Transverse colon (tissue), 4 donors: ENCODE measurements at regions of chr1 and their contacts with region 1.

Region 1: DNA sequence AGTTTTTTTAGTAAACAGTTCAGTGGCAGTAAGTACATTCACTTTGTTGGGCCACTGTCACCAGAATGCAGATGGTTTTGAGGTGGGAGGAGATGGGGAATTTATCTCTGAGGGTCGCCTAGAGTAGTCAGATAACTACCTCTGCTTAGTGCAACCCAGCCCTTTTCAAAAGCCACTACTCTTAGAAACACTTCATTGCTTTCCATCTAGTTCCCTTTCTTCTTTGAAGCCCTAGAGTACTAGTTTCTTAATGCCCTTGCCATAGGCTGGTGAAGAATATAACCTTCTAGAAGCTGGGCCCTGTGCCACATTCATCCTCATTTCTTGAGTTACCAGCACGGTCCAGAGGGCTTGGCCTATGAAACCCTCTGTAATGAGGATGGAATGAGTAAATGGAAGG is 28.4 kb upstream of the ST3GAL3 start:
- DNase-seq: no peak
- H3K4me3 ChIP-seq: no peak overlapping the region
- H3K27ac ChIP-seq: no peak overlapping the region
- H3K4me1 ChIP-seq: no peaks in the 10 kb centered on the region
- H3K27me3 ChIP-seq: no peaks in the 10 kb centered on the region
- CTCF ChIP-seq: no peak
- EP300 ChIP-seq: no peak
- POLR2A ChIP-seq: no peak

Region 2: GRCh38 chr1:43660355-43660754 is 18.6 kb before region 1 on chr1:
- in situ Hi-C with region 1: no loop called
- intact Hi-C with region 1: loop called (anchors 2 kb)
- DNase-seq: no peak
- H3K4me3 ChIP-seq: no peak overlapping the region
- H3K27ac ChIP-seq: no peak overlapping the region
- H3K4me1 ChIP-seq: peaks cover 0 to 12% (median 0%) of the 10 kb centered on the region in 4 donors
- H3K27me3 ChIP-seq: no peaks in the 10 kb centered on the region
- CTCF ChIP-seq: no peak
- EP300 ChIP-seq: no peak
- POLR2A ChIP-seq: no peak

Region 3: DNA sequence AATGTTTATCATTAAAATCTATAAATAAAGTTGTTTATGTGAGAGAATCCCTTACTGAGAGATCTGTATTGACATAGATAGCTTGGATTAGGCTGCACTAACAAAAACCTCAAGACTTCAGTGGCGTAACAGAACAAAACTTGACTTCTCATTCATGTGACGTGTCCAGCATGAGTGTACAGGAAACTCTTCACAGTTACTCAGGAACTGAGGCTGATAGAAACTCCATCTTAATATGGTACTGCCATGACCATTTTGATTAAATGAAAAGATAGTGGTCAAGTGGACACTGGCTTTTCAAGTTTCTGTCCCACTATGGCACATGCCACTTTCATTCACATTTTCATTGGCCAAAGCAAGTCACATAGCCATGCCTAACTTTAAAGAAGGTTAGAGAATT is 32.1 kb after region 1 on chr1:
- in situ Hi-C with region 1: no loop called
- intact Hi-C with region 1: no loop called
- DNase-seq: no peak
- H3K4me3 ChIP-seq: no peak overlapping the region
- H3K27ac ChIP-seq: no peak overlapping the region
- H3K4me1 ChIP-seq: peaks cover 6 to 24% (median 16%) of the 10 kb centered on the region in 4 donors
- H3K27me3 ChIP-seq: no peaks in the 10 kb centered on the region
- CTCF ChIP-seq: no peak
- EP300 ChIP-seq: no peak
- POLR2A ChIP-seq: no peak

Region 4: DNA sequence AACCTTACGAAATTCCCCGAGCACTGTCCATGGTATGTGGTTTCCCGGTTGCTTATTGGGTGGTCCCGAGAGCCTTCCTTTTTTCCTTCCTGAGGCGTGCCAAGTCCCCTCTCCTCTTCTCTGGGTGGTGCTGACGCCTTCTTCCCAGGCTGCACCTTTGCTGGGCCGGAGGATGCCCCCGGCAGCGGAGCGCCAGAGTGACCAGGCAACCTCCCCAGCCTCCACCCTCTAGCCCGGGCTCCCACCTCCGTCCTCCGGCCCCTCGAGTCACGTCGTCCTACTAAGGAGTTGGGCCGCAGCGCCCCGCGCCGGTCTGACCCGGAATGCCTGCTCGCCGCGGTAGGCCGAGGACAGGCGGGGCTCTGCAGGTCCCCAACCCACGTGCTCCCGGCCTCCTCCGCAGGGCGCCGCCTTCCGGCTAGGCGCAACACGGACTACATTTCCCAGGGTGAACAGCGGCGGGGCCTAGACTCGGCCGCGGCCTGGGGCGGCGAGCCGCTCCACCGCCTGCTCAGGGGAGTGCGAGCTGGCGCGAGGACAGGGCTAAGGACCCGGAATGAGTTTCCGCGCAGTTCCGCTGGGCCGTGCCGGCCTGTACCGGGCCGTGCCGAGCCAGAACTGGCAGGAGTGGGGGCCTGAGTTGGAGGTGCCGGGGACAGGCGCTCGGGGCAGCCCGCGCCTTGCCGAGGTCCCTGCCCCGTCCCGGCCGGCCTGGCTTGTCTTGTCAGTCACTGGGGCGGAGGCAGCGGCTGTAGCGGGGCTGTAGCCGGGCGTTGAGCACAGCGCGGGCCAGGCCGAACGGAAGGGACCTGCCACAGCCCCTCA is 267.5 kb after region 1 on chr1 and contains the start of gene IPO13:
- in situ Hi-C with region 1: no loop called
- intact Hi-C with region 1: no loop called
- DNase-seq: peak; percentile 97
- H3K4me3 ChIP-seq: peak within 1 kb of the TSS; percentile 70 to 83 (median 74)
- H3K27ac ChIP-seq: peak within 1 kb of the TSS; percentile 88 to 93 (median 90)
- H3K4me1 ChIP-seq: peaks cover 14 to 43% (median 23%) of the 10 kb centered on the region in 4 donors
- H3K27me3 ChIP-seq: no peaks in the 10 kb centered on the region
- CTCF ChIP-seq: peak; percentile 64 to 95 (median 78)
- EP300 ChIP-seq: no peak
- POLR2A ChIP-seq: peak; percentile 77
- total RNA-seq, gene IPO13: 22.7 to 64.9 (median 36.5) TPM